Spleen (tissue), 13 donors: ENCODE measurements at regions of chr2 and their contacts with region 1.

Region 1: DNA sequence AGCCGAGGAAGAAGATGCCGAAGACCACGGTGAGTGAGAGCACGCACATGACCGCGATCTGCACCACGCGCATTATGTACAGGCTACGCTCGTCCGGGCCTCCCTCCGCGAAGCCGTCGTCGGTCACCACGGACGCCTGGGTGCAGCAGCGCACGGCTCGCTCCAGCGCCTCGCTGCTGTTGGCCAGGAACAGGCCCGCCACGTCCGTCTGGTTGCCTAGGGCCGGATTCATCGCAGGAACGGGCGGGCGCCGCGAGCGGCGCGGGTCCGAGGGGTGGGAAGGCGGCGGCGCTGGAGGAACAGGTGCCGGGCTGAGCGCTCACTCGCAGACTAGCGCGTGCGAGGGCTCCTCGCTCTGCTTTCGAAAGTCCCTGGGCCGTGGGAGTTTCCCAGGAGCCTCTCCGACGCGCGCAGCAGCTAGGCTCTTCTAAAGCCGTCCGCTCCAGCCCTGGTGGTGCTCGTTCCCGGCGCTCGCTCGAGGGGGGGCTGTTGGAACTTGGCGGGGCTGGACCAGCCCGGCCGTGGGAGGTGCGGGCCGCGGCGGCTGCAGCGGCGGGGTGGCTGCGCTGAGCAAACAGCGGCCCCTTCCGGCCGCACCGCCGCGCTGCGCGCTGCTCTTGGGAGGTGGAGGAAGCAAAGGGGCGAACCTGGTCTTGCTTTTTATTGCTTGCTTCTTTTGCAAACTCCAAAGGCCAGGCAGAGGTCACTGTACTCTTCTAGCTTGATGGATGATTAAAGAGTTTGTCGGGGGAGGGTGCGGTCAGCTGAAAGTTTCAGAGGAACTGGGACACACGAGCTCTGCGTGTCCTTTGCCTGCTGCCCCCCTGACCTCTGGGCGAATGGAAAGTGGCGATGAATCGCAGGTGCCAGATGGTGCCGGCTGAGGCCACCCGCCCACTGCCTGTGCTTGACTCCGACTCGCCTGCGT is at the start of gene RPRM:
- DNase-seq: peak; percentile 90
- H3K4me3 ChIP-seq: peak within 1 kb of the TSS; percentile 40 to 78 (median 50)
- H3K27ac ChIP-seq: peak within 1 kb of the TSS in 5 of 8 donors; percentile 9 to 66 (median 30)
- H3K4me1 ChIP-seq: peaks cover 9 to 32% (median 27%) of the 10 kb centered on the region in 6 donors
- H3K27me3 ChIP-seq: peaks cover 0 to 88% (median 53%) of the 10 kb centered on the region in 7 donors
- CTCF ChIP-seq: peak; percentile 16 to 92 (median 82)
- POLR2A ChIP-seq: no peak
- total RNA-seq, gene RPRM: 0.67 to 2.2 (median 1.5) TPM

Region 2: DNA sequence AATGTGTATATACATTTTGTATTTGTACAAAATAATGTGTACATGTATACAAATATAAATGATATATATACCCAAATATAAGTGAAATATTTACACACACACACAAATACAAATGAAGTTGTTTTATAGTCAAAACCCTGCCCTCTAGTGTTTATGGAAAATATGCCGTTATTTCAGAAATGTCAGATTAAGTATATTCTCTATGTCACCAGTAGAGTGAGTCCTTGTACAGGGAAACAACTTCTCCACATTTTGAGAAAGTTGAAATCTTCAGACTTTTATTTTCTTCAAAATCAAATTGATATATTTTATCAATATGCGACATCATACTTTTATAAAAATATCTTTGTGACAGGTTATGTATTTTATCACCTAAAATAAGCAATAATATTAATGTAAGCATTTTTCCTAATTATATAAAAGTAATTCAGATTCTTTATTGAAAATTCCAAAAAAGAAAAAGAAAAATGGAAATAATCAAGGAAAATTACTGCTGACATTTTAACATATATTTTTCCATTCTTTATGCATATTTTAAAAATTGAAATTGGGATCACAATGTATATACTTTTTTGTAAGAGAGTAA is 737.8 kb before region 1 on chr2:
- intact Hi-C with region 1: loop called (anchors 5 kb)
- DNase-seq: no peak
- H3K4me3 ChIP-seq: no peak overlapping the region
- H3K27ac ChIP-seq: no peak overlapping the region
- H3K4me1 ChIP-seq: peaks cover 0 to 33% (median 9%) of the 10 kb centered on the region in 6 donors
- H3K27me3 ChIP-seq: no peaks in the 10 kb centered on the region
- CTCF ChIP-seq: peak; percentile 50 to 91 (median 74)
- POLR2A ChIP-seq: no peak